ENCODE measurements at regions of chr2 and their contacts with region 1.

Region 1: DNA sequence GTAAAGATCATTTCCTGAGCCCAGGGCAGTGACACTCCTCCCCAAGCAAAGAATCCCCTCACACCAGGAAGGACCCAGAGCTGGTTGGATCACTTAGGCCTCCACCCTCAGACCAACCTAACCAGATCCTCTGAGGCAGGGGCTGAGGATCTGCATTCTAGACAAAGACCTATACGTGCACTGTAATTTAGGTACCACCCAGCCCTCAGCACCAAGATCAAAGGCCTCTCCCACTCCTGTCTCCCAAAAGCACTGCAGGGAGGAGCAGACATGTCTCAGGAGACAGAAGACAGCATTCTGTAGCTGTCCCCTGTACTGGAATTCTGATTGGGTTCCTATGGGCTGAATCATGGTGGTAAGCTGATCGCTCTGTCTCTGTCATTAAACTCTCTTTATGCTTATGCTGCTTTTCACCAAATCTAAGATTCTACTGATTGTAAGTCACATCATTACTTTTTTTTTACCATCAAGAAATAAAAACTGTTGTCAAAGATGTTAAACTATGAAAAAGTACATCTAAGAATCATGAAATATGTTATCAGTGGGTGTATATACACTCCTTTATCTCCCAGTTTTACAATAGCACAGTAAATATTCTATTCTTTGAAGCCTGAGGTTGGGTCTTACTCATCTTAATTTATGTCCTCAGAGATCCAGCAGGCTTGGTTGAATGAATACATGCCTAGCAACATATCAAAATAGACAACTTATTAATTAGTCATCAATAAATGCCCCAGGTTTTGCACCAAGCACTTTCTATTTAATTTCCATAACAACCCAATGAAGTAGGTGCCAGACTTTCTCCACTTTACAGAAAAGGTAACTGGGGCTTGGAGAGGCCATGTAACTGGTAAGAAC is 28.3 kb downstream of the MCFD2 start:
- DNase-seq: no peak
- H3K4me3 Mint-ChIP-seq: no peak overlapping the region
- H3K27ac Mint-ChIP-seq: no peak overlapping the region
- H3K4me1 Mint-ChIP-seq: peaks cover 6% of the 10 kb centered on the region
- H3K27me3 Mint-ChIP-seq: no peaks in the 10 kb centered on the region
- CTCF ChIP-seq: no peak

Region 2: DNA sequence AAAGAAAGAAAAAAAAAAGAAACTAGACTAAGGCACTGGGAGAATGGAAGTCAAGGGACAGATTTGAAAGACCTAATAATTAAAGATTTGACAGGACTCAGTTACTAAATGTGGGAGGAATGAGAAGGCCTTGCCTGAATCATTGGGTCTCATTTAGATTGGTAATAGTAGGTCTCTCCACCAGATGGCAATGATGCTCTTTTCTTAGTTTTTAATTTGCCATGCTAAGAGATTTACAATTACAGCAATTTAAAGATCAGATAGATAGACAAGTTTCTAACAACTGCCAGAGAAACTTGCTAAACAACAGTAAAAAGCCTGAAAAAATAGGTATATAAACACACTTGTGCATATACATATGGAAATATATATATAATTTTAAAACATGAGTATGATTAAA is 254.9 kb before region 1 on chr2:
- CTCF ChIA-PET with region 1: interaction called, 7 read pairs
- POLR2A ChIA-PET with region 1: interaction called, 3 read pairs
- intact Hi-C with region 1: loop called (anchors 1 kb)
- DNase-seq: peak; percentile 68
- H3K4me3 Mint-ChIP-seq: no peak overlapping the region
- H3K27ac Mint-ChIP-seq: no peak overlapping the region
- H3K4me1 Mint-ChIP-seq: no peaks in the 10 kb centered on the region
- H3K27me3 Mint-ChIP-seq: no peaks in the 10 kb centered on the region
- CTCF ChIP-seq: peak; percentile 56

Measured in MCF 10A (cell line).